ENCODE measurements at regions of chr7 and their contacts with region 1.

Region 1: GRCh38 chr7:16420649-16421332 is 547 bp downstream of the CRPPA start:
- DNase-seq: peak; percentile 91
- ATAC-seq: peak; percentile 91
- H3K4me3 Mint-ChIP-seq: peak overlapping the region; percentile 75
- H3K27ac Mint-ChIP-seq: peak overlapping the region; percentile 97
- H3K4me1 Mint-ChIP-seq: peaks cover 27% of the 10 kb centered on the region
- H3K27me3 Mint-ChIP-seq: no peaks in the 10 kb centered on the region
- CTCF ChIP-seq: peak; percentile 55

Region 2: GRCh38 chr7:16098585-16099179 is 322.1 kb before region 1 on chr7:
- CTCF ChIA-PET with region 1: no interaction called
- POLR2A ChIA-PET with region 1: no interaction called
- intact Hi-C with region 1: loop called (anchors 10 kb)
- DNase-seq: peak; percentile 2
- ATAC-seq: no peak
- H3K4me3 Mint-ChIP-seq: no peak overlapping the region
- H3K27ac Mint-ChIP-seq: no peak overlapping the region
- H3K4me1 Mint-ChIP-seq: no peaks in the 10 kb centered on the region
- H3K27me3 Mint-ChIP-seq: no peaks in the 10 kb centered on the region
- CTCF ChIP-seq: peak; percentile 54

Region 3: GRCh38 chr7:16344927-16345326 is 75.9 kb before region 1 on chr7:
- CTCF ChIA-PET with region 1: no interaction called
- POLR2A ChIA-PET with region 1: no interaction called
- intact Hi-C with region 1: no loop called
- DNase-seq: no peak
- ATAC-seq: no peak
- H3K4me3 Mint-ChIP-seq: no peak overlapping the region
- H3K27ac Mint-ChIP-seq: no peak overlapping the region
- H3K4me1 Mint-ChIP-seq: peaks cover 7% of the 10 kb centered on the region
- H3K27me3 Mint-ChIP-seq: no peaks in the 10 kb centered on the region
- CTCF ChIP-seq: no peak

Region 4: GRCh38 chr7:16399934-16400892 is 20.6 kb before region 1 on chr7:
- CTCF ChIA-PET with region 1: no interaction called
- POLR2A ChIA-PET with region 1: no interaction called
- intact Hi-C with region 1: loop called (anchors 2 kb)
- DNase-seq: no peak
- ATAC-seq: no peak
- H3K4me3 Mint-ChIP-seq: no peak overlapping the region
- H3K27ac Mint-ChIP-seq: no peak overlapping the region
- H3K4me1 Mint-ChIP-seq: peaks cover 3% of the 10 kb centered on the region
- H3K27me3 Mint-ChIP-seq: no peaks in the 10 kb centered on the region
- CTCF ChIP-seq: no peak

Region 5: DNA sequence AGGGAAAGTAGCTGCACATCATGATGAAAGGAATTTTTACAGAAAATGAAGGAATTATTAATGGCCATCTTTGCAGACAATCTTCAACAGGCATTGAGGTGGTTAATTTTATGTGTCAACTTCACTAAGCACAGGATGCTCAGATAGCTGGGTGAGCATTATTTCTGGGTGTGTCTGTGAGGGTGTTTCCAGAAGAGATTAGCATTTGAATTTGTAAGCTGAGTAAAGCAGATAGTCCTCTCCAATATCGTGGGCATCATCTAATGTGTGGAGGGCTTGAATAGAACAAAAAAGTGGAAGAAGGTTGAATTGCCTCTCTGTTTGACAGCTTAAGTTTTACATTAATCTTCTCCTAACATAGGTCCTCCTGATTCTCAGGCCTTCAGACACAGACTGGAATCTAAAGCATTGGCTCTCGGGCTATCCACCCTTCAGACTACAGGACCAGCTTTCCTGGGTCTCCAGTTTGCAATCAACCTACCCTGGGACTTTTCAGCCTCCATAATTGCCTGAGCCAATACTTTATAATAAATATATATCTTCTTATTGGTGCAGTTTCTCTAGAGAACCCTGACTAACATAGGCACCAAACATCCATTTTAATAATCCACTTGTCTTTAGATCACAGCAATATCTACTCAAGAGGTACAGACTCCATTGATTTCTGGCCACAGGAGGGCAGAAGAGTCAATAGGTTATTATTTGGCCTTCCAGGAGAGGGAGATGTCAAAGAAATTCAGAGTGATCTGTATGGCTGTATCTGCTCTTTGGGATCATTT is 11.0 kb after region 1 on chr7:
- CTCF ChIA-PET with region 1: interaction called, 25 read pairs
- POLR2A ChIA-PET with region 1: interaction called, 22 read pairs
- intact Hi-C with region 1: no loop called
- DNase-seq: peak; percentile 54
- ATAC-seq: peak; percentile 74
- H3K4me3 Mint-ChIP-seq: no peak overlapping the region
- H3K27ac Mint-ChIP-seq: no peak overlapping the region
- H3K4me1 Mint-ChIP-seq: no peaks in the 10 kb centered on the region
- H3K27me3 Mint-ChIP-seq: no peaks in the 10 kb centered on the region
- CTCF ChIP-seq: peak; percentile 52

Region 6: DNA sequence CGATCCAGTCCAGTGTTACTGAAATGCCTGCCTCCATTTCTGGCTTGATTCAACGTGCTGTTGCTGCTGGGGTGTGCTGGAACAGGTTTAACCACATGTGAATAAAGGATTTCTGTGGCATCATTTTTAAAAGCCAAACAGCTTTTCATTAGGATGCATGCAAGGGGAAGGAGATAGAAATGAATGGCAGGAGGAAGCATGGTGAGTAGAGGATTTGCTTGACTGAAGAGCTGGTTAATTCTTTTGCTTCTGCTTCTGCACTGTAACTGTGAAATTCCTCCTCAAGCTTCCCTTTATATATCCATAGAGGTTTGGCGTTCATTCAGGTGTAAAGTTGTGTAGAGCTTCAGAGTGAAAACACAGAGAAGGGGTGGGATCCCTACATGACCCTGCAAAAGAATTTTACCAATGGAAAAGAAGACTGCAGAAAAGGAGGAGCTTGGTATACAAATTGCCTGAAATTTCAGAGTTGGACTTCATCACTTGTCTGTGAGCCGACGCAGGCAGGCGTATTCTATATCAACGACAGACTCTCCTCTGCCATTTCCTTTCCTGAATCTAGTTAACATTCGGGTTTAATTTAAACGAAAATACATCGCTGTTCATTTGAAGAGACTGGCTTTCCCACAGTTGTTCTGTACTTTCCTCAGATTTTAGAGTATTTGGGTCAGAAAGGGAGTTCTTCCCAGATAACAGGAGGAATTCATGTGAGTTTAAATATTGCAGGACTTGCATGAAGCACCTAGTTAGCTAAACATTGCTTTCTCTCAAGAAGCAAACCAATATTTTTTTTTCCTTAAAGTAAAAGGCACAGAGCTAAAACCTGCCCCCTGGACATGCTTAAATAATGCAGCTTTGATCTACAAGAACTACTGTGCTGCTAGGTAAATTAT is 44.9 kb after region 1 on chr7 and contains the start of gene SOSTDC1:
- CTCF ChIA-PET with region 1: no interaction called
- POLR2A ChIA-PET with region 1: no interaction called
- intact Hi-C with region 1: no loop called
- DNase-seq: no peak
- ATAC-seq: no peak
- H3K4me3 Mint-ChIP-seq: no peak within 1 kb of the TSS
- H3K27ac Mint-ChIP-seq: no peak within 1 kb of the TSS
- H3K4me1 Mint-ChIP-seq: peaks cover 2% of the 10 kb centered on the region
- H3K27me3 Mint-ChIP-seq: peaks cover 12% of the 10 kb centered on the region
- CTCF ChIP-seq: no peak
- total RNA-seq, gene SOSTDC1: not detected

Region 7: DNA sequence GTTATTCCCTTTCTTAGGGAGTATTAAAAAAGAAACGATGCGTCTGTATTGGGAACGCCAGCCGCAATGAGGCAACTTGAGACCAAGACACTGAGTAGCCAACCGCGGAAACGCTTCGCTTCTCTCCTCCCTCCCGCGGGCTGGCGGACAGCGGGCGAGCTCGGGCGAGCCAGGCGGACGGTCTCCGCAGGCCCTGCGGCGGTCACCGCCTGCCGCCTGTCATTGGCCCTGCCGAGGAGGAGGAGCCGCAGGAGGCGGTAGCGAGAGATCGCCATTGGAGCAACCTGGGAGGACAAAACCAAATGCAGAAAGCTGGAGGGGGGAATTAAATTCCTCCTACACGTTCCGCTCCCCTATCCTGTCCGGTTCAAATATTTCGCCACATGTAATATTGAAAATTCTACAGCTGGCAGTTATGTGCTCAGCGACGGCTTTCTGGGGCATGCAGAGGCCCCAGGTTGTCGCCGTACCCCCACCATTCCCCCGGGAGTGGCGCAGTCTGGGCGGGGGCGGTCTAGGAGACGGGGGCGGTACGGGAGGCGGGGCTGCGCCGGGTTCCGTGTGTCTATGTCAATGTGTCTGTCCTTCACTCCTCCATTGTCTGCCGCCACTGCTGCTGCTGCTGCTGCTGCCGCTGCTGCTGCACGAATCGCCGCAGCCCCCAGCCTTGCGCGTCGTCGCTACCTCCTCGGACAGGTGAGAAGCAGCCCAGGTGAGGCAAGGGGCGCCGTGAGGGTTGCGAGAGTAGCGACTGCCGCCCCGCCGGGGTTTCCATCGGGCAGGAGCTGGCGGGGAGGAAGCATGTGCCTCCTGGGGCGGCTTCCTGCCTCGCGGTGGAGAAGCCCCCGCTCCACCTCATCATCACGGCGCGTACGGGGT is 225.0 kb after region 1 on chr7 and contains the starts of genes ANKMY2 and BZW2:
- CTCF ChIA-PET with region 1: interaction called, 3 read pairs
- POLR2A ChIA-PET with region 1: interaction called, 13 read pairs
- intact Hi-C with region 1: no loop called
- DNase-seq: peak; percentile 93
- ATAC-seq: peak; percentile 91
- H3K4me3 Mint-ChIP-seq: peak within 1 kb of the TSS; percentile 93
- H3K27ac Mint-ChIP-seq: peak within 1 kb of the TSS; percentile 94
- H3K4me1 Mint-ChIP-seq: peaks cover 52% of the 10 kb centered on the region
- H3K27me3 Mint-ChIP-seq: no peaks in the 10 kb centered on the region
- CTCF ChIP-seq: no peak
- total RNA-seq, gene ANKMY2: 9.8 to 10.5 TPM
- total RNA-seq, gene BZW2: 120 to 123 TPM